GM23248 (cell line): ENCODE measurements at regions of chr2 and their contacts with region 1.

Region 1: DNA sequence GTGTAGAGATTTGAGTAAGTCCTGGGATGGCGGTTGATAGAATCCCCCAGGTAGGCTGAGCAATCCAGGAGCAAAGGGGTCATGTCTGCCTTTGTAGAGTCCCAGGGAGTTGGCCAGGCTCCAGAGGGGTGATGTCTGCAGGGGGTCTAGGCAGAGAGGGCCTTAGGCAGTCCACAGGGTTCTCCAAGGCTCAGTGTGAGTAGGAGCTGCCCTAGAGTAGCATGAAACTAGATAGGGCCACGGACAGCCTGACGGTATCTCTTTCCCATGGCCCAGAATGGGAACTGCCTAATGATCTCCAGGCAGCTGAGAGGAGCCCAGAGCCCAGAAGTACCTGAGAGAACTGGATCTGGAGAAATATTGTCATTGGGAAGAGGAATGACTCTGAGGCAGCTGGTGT is 9.0 kb upstream of the FAM136A start:
- DNase-seq: no peak
- H3K4me3 ChIP-seq: no peak overlapping the region
- H3K27ac ChIP-seq: no peak overlapping the region
- H3K4me1 ChIP-seq: no peaks in the 10 kb centered on the region
- H3K27me3 ChIP-seq: no peaks in the 10 kb centered on the region

Region 2: GRCh38 chr2:69781321-69782248 is 529.3 kb before region 1 on chr2:
- in situ Hi-C with region 1: no loop called
- DNase-seq: no peak
- H3K4me3 ChIP-seq: no peak overlapping the region
- H3K27ac ChIP-seq: no peak overlapping the region
- H3K4me1 ChIP-seq: peaks cover 8% of the 10 kb centered on the region
- H3K27me3 ChIP-seq: no peaks in the 10 kb centered on the region

Region 3: DNA sequence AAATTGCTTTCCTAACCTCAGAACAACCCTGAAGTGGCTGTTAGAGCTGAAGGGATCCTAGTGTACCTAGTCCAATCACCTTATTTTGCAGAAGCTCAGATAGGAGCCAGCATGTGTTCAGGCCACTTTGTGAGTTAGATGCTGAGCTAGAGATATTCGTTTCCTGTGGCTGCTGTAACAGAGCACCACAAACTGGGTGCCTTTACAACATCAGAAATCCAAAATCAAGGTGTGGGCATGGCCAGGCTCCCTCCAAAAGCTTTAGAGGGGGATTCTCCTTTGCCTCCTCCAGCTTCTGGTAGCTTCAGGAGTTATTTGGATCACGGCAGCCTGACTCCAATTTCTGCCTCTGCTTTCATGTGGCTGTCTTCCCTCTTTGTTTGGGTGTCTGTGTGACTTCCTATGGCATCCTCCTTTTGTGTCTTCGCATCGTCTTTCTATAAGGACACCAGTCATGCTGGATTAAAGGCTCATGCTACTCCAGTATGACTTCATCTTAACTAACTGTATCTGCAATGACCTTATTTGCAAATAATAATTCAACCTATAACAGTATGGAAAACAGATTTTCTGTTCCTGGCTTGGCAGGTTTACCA is 329.0 kb after region 1 on chr2:
- in situ Hi-C with region 1: loop called (anchors 10 kb)
- DNase-seq: no peak
- H3K4me3 ChIP-seq: no peak overlapping the region
- H3K27ac ChIP-seq: no peak overlapping the region
- H3K4me1 ChIP-seq: no peaks in the 10 kb centered on the region
- H3K27me3 ChIP-seq: peaks cover 24% of the 10 kb centered on the region